Mammary epithelial cell (primary cell): ENCODE measurements at regions of chr11 and their contacts with region 1.

Region 1: GRCh38 chr11:69593902-69594253 is 47.1 kb upstream of the CCND1 start:
- DNase-seq: no peak
- H3K4me3 ChIP-seq: no peak overlapping the region
- H3K27ac ChIP-seq: no peak overlapping the region
- H3K4me1 ChIP-seq: no peaks in the 10 kb centered on the region
- H3K27me3 ChIP-seq: no peaks in the 10 kb centered on the region
- CTCF ChIP-seq: no peak

Region 2: DNA sequence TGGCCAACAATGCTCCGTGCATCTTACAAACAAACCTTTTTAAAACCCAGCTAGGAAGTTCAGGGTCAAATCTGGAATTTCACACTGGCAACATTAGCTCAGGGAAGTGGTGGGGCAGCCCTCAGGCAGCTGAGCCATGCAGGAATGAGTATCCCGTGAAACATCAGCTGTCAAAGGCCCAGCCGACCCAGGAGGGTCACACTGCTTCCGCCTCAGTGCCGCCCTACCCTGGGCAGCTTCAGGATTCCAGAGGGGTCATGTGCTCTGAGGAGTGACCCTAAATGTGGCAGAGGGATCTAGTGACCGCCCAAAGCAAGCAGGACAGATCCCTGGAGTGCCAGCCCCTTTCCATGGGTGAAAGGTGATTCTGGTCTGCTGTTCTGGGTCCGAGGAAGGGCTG is 39.0 kb before region 1 on chr11:
- CTCF ChIA-PET with region 1: no interaction called
- dilution Hi-C with region 1: loop called (anchors 5 kb)
- in situ Hi-C with region 1: no loop called
- intact Hi-C with region 1: no loop called
- DNase-seq: no peak
- H3K4me3 ChIP-seq: no peak overlapping the region
- H3K27ac ChIP-seq: no peak overlapping the region
- H3K4me1 ChIP-seq: peaks cover 8% of the 10 kb centered on the region
- H3K27me3 ChIP-seq: no peaks in the 10 kb centered on the region
- CTCF ChIP-seq: no peak

Region 3: GRCh38 chr11:70290361-70291065 is 696.6 kb after region 1 on chr11:
- CTCF ChIA-PET with region 1: no interaction called
- dilution Hi-C with region 1: no loop called
- in situ Hi-C with region 1: no loop called
- intact Hi-C with region 1: no loop called
- DNase-seq: peak; percentile 64
- H3K4me3 ChIP-seq: peak overlapping the region in 1 of 3 experiments; percentile 29
- H3K27ac ChIP-seq: peak overlapping the region; percentile 44
- H3K4me1 ChIP-seq: peaks cover 11% of the 10 kb centered on the region
- H3K27me3 ChIP-seq: no peaks in the 10 kb centered on the region
- CTCF ChIP-seq: no peak